ENCODE measurements at regions of chr5 and their contacts with region 1.

Region 1: GRCh38 chr5:97009212-97009898 is 73.5 kb downstream of the LNPEP start:
- DNase-seq: no peak
- H3K4me3 ChIP-seq: no peak overlapping the region
- H3K27ac ChIP-seq: no peak overlapping the region
- H3K4me1 ChIP-seq: peaks cover 0 to 9% (median 2%) of the 10 kb centered on the region in 4 donors
- H3K27me3 ChIP-seq: no peaks in the 10 kb centered on the region
- CTCF ChIP-seq: no peak
- EP300 ChIP-seq: no peak
- POLR2A ChIP-seq: no peak

Region 2: GRCh38 chr5:96776621-96777020 is 232.7 kb before region 1 on chr5:
- intact Hi-C with region 1: loop called (anchors 10 kb)
- DNase-seq: no peak
- H3K4me3 ChIP-seq: no peak overlapping the region
- H3K27ac ChIP-seq: peak overlapping the region in 3 of 4 donors; percentile 27 to 52 (median 50)
- H3K4me1 ChIP-seq: peaks cover 13 to 50% (median 41%) of the 10 kb centered on the region in 4 donors
- H3K27me3 ChIP-seq: no peaks in the 10 kb centered on the region
- CTCF ChIP-seq: no peak
- EP300 ChIP-seq: no peak
- POLR2A ChIP-seq: no peak